ENCODE measurements at regions of chr1 and their contacts with region 1.

Region 1: GRCh38 chr1:17274186-17275170 is 25.6 kb downstream of the PADI3 start:
- DNase-seq: peak; percentile 36
- H3K4me3 ChIP-seq: no peak overlapping the region
- H3K27ac ChIP-seq: no peak overlapping the region
- H3K4me1 ChIP-seq: no peaks in the 10 kb centered on the region
- H3K27me3 ChIP-seq: no peaks in the 10 kb centered on the region
- CTCF ChIP-seq: peak; percentile 72 to 91
- POLR2A ChIP-seq: no peak

Region 2: DNA sequence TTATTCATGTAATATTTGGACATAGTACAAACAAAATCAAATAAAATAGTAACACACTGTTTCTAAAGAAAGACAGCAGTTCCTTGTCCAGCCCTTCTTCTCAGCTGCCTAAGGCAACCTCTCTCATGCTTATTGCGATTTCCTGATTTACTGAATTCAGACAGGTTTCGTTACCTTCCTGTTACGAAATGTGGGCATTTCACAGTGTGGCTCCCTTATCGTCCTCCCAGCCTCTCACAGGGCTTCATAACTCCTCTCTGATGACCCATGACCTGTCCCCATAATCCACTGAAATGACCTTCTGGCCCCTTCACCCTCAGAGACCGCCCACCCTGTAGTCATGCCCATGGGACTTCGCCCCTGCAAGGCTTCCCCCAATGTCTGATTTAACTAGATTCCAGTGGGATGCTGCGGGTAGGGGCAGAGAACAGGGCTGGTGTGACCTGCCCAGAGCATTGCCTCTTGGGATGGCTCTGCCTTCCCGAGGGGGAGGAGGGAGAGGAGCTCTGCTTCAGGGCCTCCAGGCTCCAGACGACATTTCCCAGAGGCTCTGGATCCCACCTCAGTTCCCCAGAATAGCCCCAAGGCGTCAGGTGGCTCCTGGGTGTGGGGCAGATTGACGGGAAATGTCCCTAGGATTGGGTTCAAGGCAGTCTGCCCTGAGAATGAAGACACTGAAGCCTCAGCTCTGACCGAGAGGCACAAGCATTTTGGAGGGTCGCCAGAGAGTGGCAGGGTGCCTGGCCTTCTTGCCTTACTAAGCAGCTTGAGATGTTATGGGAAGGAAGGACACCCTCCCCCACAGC is 175.8 kb before region 1 on chr1:
- CTCF ChIA-PET with region 1: no interaction called
- POLR2A ChIA-PET with region 1: no interaction called
- dilution Hi-C with region 1: no loop called
- intact Hi-C with region 1: no loop called
- DNase-seq: no peak
- H3K4me3 ChIP-seq: no peak overlapping the region
- H3K27ac ChIP-seq: no peak overlapping the region
- H3K4me1 ChIP-seq: no peaks in the 10 kb centered on the region
- H3K27me3 ChIP-seq: peaks cover 0 to 4% of the 10 kb centered on the region in 2 experiments
- CTCF ChIP-seq: no peak
- POLR2A ChIP-seq: no peak

Region 3: GRCh38 chr1:17250601-17251000 is 23.9 kb before region 1 on chr1:
- CTCF ChIA-PET with region 1: interaction called, 6 read pairs
- POLR2A ChIA-PET with region 1: no interaction called
- dilution Hi-C with region 1: no loop called
- intact Hi-C with region 1: loop called (anchors 2 kb)
- DNase-seq: peak; percentile 45
- H3K4me3 ChIP-seq: no peak overlapping the region
- H3K27ac ChIP-seq: no peak overlapping the region
- H3K4me1 ChIP-seq: peaks cover 15% of the 10 kb centered on the region
- H3K27me3 ChIP-seq: no peaks in the 10 kb centered on the region
- CTCF ChIP-seq: no peak
- POLR2A ChIP-seq: no peak

Region 4: DNA sequence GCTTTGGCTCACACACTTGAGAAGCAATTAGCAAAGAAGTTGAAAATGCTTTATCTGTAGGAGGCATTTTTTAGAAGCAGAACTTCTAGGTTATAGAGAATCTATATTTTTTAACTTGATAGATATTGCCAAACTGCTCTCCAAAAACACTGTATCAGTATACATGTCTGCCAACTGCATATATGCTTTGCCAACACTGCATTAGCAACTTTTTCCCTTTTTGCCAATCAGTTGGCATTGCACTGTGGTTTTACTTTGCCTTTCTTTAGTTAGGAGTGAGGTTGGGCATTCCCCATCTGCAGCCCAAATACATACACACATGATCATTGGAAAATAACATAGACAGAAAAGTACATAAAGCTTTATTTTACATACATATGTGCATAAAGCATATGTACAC is 10.5 kb before region 1 on chr1:
- CTCF ChIA-PET with region 1: interaction called, 22 read pairs
- POLR2A ChIA-PET with region 1: no interaction called
- dilution Hi-C with region 1: no loop called
- intact Hi-C with region 1: no loop called
- DNase-seq: no peak
- H3K4me3 ChIP-seq: no peak overlapping the region
- H3K27ac ChIP-seq: no peak overlapping the region
- H3K4me1 ChIP-seq: no peaks in the 10 kb centered on the region
- H3K27me3 ChIP-seq: peaks cover 3 to 8% of the 10 kb centered on the region in 2 experiments
- CTCF ChIP-seq: no peak
- POLR2A ChIP-seq: no peak

Region 5: DNA sequence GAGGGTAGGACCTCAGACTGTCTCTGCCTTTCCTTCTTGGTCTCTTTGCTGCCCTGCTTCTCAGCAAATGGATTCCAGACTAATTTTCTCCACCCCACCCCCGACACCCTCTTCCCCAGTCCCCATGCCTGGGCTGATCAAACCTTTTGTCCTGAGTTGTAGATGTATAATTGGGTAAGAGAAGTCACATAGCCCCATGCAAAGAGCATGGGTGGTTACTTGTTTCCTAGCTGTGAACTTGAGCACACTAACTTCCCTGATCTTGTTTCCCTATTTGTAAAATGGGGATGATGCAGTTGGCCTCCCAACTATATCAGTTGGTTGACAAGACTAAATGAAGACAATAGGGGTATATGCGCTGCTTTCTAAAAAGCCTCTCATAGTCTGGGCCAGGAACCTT is 106.7 kb after region 1 on chr1:
- CTCF ChIA-PET with region 1: no interaction called
- POLR2A ChIA-PET with region 1: no interaction called
- dilution Hi-C with region 1: no loop called
- intact Hi-C with region 1: no loop called
- DNase-seq: no peak
- H3K4me3 ChIP-seq: no peak overlapping the region
- H3K27ac ChIP-seq: no peak overlapping the region
- H3K4me1 ChIP-seq: no peaks in the 10 kb centered on the region
- H3K27me3 ChIP-seq: peaks cover 0 to 3% of the 10 kb centered on the region in 2 experiments
- CTCF ChIP-seq: no peak
- POLR2A ChIP-seq: no peak